PC-3 (cell line): ENCODE measurements at regions of chr3 and their contacts with region 1.

Region 1: GRCh38 chr3:51371943-51372557 is 13.0 kb upstream of the MANF start:
- DNase-seq: peak; percentile 95
- ATAC-seq: peak; percentile 90
- H3K4me3 ChIP-seq: no peak overlapping the region
- H3K27ac ChIP-seq: no peak overlapping the region
- H3K4me1 ChIP-seq: no peaks in the 10 kb centered on the region
- H3K27me3 ChIP-seq: peaks cover 9% of the 10 kb centered on the region
- CTCF ChIP-seq: peak; percentile 89

Region 2: DNA sequence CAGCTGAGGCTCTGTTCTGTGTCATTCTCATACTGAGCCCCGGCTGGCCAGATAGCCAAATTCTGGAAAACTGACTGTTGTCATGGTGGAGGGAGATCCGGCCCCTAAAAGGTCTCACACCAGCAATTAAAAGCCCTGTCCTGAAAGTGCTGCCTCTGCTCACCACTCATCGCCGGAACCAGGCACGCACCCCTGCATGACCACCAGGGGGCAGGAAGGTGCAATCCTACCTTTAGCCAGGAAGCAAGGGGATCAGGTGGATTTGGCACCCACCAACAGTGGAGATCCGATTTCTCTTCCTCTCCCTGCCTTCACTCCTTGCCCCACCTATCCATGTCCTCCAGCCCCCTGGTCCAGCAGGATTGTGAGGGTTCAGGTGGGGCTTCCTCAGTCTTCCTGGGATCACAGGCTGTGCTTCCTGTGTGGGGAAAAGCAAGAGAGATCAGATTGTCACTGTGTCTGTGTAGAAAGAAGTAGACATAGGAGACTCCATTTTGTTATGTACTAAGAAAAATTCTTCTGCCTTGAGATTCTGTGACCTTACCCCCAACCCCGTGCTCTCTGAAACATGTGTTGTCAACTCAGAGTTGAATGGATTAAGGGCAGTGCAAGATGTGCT is 852.5 kb before region 1 on chr3:
- CTCF ChIA-PET with region 1: no interaction called
- POLR2A ChIA-PET with region 1: no interaction called
- intact Hi-C with region 1: loop called (anchors 2 kb)
- DNase-seq: peak; percentile 77
- ATAC-seq: peak; percentile 91
- H3K4me3 ChIP-seq: no peak overlapping the region
- H3K27ac ChIP-seq: no peak overlapping the region
- H3K4me1 ChIP-seq: no peaks in the 10 kb centered on the region
- H3K27me3 ChIP-seq: peaks cover 9% of the 10 kb centered on the region; the same call in 1 of the 2 replicates
- CTCF ChIP-seq: peak; percentile 93

Region 3: DNA sequence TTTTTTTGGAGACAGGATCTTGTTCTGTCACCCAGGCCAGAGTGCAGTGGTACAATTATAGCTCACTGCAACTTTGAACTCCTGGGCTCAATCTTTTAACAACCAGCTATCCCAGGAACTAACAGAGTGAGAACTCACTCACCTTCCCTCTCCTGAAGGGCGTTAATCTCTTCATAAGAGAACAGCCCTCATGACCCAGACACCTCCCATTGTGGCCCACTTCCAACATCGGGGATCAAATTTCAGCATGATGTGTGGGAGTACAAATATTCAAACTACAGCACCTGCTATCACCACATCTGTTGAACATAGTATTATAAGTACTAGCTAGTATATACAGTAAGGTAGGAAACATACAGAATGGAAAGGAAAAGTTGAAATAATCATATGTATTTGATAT is 564.8 kb before region 1 on chr3:
- CTCF ChIA-PET with region 1: no interaction called
- POLR2A ChIA-PET with region 1: no interaction called
- intact Hi-C with region 1: loop called (anchors 5 kb)
- DNase-seq: peak; percentile 46
- ATAC-seq: no peak; the same call in 1 of the 2 replicates
- H3K4me3 ChIP-seq: no peak overlapping the region
- H3K27ac ChIP-seq: no peak overlapping the region
- H3K4me1 ChIP-seq: peaks cover 11% of the 10 kb centered on the region
- H3K27me3 ChIP-seq: no peaks in the 10 kb centered on the region
- CTCF ChIP-seq: no peak

Region 4: GRCh38 chr3:50971487-50971924 is 400.5 kb before region 1 on chr3:
- CTCF ChIA-PET with region 1: interaction called, 10 read pairs
- POLR2A ChIA-PET with region 1: no interaction called
- intact Hi-C with region 1: loop called (anchors 2 kb)
- DNase-seq: peak; percentile 80
- ATAC-seq: peak; percentile 92
- H3K4me3 ChIP-seq: no peak overlapping the region
- H3K27ac ChIP-seq: no peak overlapping the region
- H3K4me1 ChIP-seq: no peaks in the 10 kb centered on the region
- H3K27me3 ChIP-seq: no peaks in the 10 kb centered on the region
- CTCF ChIP-seq: peak; percentile 92

Region 5: DNA sequence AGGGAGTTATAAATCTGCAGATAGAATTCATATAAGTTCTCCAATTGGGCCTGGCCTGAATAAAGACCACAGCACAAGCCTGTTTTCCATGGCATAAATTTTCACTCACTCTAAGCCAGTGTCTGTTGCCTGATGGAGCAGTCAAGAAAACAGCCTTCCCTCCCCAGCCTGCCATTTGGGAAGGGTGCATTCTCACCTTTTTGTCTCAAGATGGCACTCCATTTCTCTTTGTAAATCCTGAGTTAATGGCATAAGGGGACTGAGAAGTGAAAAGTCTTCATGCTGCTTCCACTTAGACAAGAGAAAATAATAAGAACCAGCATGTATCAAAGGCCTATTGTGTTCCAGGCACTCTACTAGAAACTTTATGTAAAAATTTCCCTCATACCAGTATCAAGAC is 102.6 kb before region 1 on chr3:
- CTCF ChIA-PET with region 1: interaction called, 4 read pairs
- POLR2A ChIA-PET with region 1: no interaction called
- intact Hi-C with region 1: loop called (anchors 1 kb)
- DNase-seq: peak; percentile 25
- ATAC-seq: peak; percentile 42; the same call in 1 of the 2 replicates
- H3K4me3 ChIP-seq: no peak overlapping the region
- H3K27ac ChIP-seq: no peak overlapping the region
- H3K4me1 ChIP-seq: no peaks in the 10 kb centered on the region
- H3K27me3 ChIP-seq: peaks cover 33% of the 10 kb centered on the region
- CTCF ChIP-seq: peak; percentile 37; the same call in 1 of the 2 replicates